HEK293 (cell line): ENCODE measurements at regions of chr4 and their contacts with region 1.

Region 1: GRCh38 chr4:138680989-138681604 is 334.5 kb upstream of the NOCT start:
- H3K4me3 ChIP-seq: no peak overlapping the region
- H3K27ac ChIP-seq: no peak overlapping the region
- H3K4me1 ChIP-seq: no peaks in the 10 kb centered on the region
- CTCF ChIP-seq: peak; percentile 49; the same call in 1 of the 2 replicates

Region 2: DNA sequence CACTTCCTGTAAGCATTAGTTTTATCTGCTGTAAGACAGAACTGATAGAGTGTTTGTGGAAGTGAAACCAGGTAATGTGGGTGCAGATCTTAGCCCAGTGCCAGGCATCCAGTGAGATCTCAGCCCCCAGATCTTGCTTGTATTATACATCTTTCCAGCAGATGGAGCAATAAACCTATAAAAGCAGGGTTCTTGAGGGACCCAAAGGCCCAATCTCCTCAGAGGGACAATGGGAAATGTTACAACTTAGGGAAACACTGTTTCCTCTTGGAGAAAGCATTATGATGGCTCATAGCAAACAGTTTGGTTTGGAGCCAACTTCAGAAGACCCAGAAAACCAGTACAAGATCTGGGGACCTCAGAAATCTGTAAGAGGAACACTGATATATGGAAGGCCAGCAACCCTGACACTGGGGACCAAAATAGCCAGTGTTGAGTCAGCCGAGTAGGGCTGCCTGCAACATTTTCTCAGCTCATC is 645.3 kb before region 1 on chr4:
- CTCF ChIA-PET with region 1: interaction called, 22 read pairs
- POLR2A ChIA-PET with region 1: no interaction called
- H3K4me3 ChIP-seq: no peak overlapping the region
- H3K27ac ChIP-seq: no peak overlapping the region
- H3K4me1 ChIP-seq: no peaks in the 10 kb centered on the region
- CTCF ChIP-seq: no peak

Region 3: GRCh38 chr4:138090150-138090917 is 590.8 kb before region 1 on chr4:
- CTCF ChIA-PET with region 1: interaction called, 11 read pairs
- POLR2A ChIA-PET with region 1: no interaction called
- H3K4me3 ChIP-seq: peak overlapping the region; percentile 18
- H3K27ac ChIP-seq: no peak overlapping the region
- H3K4me1 ChIP-seq: no peaks in the 10 kb centered on the region
- CTCF ChIP-seq: no peak; the same call in 1 of the 2 replicates

Region 4: GRCh38 chr4:138577145-138577544 is 104.0 kb before region 1 on chr4:
- CTCF ChIA-PET with region 1: interaction called, 15 read pairs
- POLR2A ChIA-PET with region 1: no interaction called
- H3K4me3 ChIP-seq: no peak overlapping the region
- H3K27ac ChIP-seq: no peak overlapping the region
- H3K4me1 ChIP-seq: no peaks in the 10 kb centered on the region
- CTCF ChIP-seq: no peak

Region 5: DNA sequence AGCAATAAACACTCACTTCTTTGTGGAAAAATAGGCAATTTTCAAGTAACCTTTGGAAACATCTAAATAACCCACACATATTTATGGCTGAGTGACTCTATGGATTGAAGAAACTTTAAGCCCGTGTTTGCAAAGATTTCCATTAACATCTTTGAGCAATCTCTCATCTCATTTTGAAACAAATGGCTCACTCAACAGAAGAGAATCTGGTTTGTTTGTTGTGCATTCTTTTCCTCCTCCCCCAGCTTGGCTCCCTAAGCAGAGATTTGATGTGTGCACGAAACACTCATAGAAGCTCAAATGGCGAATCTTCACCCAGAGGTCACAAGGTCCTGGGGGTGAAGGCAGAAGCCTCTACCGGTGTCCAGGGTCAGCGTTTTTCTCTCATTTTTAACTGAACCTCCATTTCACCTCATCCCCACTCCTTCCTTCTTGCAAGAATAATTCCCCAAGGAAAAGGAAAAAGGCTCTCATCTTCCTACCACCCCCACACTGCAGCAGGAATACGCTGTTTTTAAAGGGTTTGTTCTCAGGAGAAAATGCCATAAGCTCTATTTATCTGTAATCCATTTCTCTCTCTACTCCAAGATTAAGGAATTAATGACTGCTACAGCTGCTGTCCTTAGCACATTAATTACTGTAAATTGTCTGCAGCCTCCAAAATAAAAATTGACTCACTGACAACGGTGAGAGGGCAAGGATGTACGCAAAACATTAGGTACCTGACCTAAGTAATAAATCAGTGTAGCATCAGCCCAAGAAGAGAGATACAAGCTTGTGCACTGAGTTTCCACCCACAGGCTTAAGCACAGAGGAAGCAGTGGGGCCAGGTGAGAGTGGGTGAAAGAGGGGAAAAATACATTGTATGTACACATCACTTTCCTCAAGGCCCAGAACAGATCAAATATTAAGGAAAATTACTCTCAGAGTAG is 26.9 kb after region 1 on chr4:
- CTCF ChIA-PET with region 1: no interaction called
- POLR2A ChIA-PET with region 1: no interaction called
- H3K4me3 ChIP-seq: no peak overlapping the region
- H3K27ac ChIP-seq: no peak overlapping the region
- H3K4me1 ChIP-seq: no peaks in the 10 kb centered on the region
- CTCF ChIP-seq: no peak

Region 6: GRCh38 chr4:138870737-138871554 is 189.8 kb after region 1 on chr4:
- CTCF ChIA-PET with region 1: interaction called, 11 read pairs
- POLR2A ChIA-PET with region 1: no interaction called
- H3K4me3 ChIP-seq: no peak overlapping the region
- H3K27ac ChIP-seq: no peak overlapping the region
- H3K4me1 ChIP-seq: no peaks in the 10 kb centered on the region
- CTCF ChIP-seq: no peak

Region 7: GRCh38 chr4:138938366-138938690 is 257.2 kb after region 1 on chr4:
- CTCF ChIA-PET with region 1: interaction called, 14 read pairs
- POLR2A ChIA-PET with region 1: no interaction called
- H3K4me3 ChIP-seq: no peak overlapping the region
- H3K27ac ChIP-seq: no peak overlapping the region
- H3K4me1 ChIP-seq: no peaks in the 10 kb centered on the region
- CTCF ChIP-seq: no peak; the same call in 1 of the 2 replicates